ENCODE measurements at regions of chr6 and their contacts with region 1.

Region 1: DNA sequence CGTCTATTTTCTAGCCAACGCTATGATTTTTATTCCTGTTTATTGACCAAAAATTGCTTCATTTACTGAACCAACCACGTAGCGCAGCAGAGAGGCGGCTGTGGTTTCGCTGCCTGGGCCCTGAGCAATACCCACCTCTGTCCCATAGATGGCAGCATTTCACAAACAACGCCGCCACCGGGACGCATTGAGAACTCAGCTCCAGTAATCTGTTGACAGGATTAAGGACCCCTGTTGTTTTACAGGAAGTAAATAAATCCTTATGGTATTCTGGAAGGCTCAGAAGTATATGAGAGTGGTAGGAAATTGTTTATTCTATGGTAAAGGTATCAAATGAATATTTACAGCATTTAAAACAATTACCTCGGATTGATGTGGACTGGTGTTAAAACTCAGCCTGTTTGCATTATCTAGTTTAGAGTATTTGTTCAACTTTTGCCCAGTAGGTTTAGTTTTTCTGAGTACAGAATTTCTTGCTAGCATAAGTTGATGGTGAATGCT is 547.9 kb upstream of the SLC35B3 start:
- DNase-seq: peak in 32 of 35 experiments; percentile 0 to 58 (median 21)
- ATAC-seq: peak; percentile 44 to 70 (median 62)
- H3K4me3 ChIP-seq: no peak overlapping the region
- H3K4me3 Mint-ChIP-seq: no peak overlapping the region
- H3K27ac ChIP-seq: no peak overlapping the region
- H3K27ac Mint-ChIP-seq: no peak overlapping the region
- H3K4me1 ChIP-seq: no peaks in the 10 kb centered on the region
- H3K4me1 Mint-ChIP-seq: no peaks in the 10 kb centered on the region
- H3K27me3 ChIP-seq: no peaks in the 10 kb centered on the region
- H3K27me3 Mint-ChIP-seq: peaks cover 8 to 26% of the 10 kb centered on the region in 2 donors

Region 2: GRCh38 chr6:8953310-8953709 is 29.9 kb before region 1 on chr6:
- CTCF ChIA-PET with region 1: no interaction called
- POLR2A ChIA-PET with region 1: no interaction called
- DNase-seq: no peak
- ATAC-seq: no peak
- H3K4me3 ChIP-seq: no peak overlapping the region
- H3K4me3 Mint-ChIP-seq: no peak overlapping the region
- H3K27ac ChIP-seq: no peak overlapping the region
- H3K27ac Mint-ChIP-seq: no peak overlapping the region
- H3K4me1 ChIP-seq: no peaks in the 10 kb centered on the region
- H3K4me1 Mint-ChIP-seq: no peaks in the 10 kb centered on the region
- H3K27me3 ChIP-seq: no peaks in the 10 kb centered on the region
- H3K27me3 Mint-ChIP-seq: peaks cover 0 to 5% of the 10 kb centered on the region in 2 donors

Region 3: GRCh38 chr6:10434692-10435376 is 1451.6 kb after region 1 on chr6:
- CTCF ChIA-PET with region 1: interaction called, 7 to 10 read pairs
- POLR2A ChIA-PET with region 1: no interaction called
- DNase-seq: peak in 1 of 35 experiments; percentile 58
- ATAC-seq: no peak
- H3K4me3 ChIP-seq: no peak overlapping the region
- H3K4me3 Mint-ChIP-seq: no peak overlapping the region
- H3K27ac ChIP-seq: no peak overlapping the region
- H3K27ac Mint-ChIP-seq: no peak overlapping the region
- H3K4me1 ChIP-seq: peaks cover 0 to 7% of the 10 kb centered on the region in 2 experiments
- H3K4me1 Mint-ChIP-seq: peaks cover 5 to 9% (median 7%) of the 10 kb centered on the region in 3 donors
- H3K27me3 ChIP-seq: peaks cover 2 to 11% of the 10 kb centered on the region in 2 experiments
- H3K27me3 Mint-ChIP-seq: peaks cover 17 to 19% of the 10 kb centered on the region in 2 donors